ENCODE measurements at regions of chr7 and their contacts with region 1.

Region 1: DNA sequence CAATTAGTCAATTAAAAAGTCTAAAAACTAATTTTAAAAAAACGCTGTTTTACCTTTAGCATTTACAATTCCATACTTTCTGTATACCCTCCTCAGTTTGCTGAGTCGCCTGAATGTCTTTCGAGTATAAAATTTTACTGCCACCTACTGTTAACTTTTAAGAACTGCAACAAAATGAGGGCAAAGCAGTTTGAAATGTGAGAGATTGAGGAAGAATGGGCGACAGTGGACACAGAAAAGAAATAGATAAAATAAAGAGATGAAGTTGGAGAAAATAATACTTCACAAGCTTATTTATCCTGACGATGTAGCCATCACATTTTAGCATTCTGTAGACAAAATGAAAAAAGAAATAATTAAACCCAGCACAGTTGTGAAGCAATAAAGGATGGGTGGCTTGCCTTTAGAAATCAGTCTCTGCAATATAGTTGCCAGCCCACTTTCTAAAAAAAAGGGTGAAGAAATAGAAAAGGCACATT is 110.8 kb upstream of the PTN start:
- DNase-seq: no peak
- ATAC-seq: peak; percentile 82
- H3K4me3 ChIP-seq: no peak overlapping the region
- H3K27ac ChIP-seq: no peak overlapping the region
- H3K4me1 ChIP-seq: no peaks in the 10 kb centered on the region
- H3K27me3 ChIP-seq: no peaks in the 10 kb centered on the region
- CTCF ChIP-seq: peak; percentile 47 to 66 (median 53); a peak in 5 of 6 replicates
- EP300 ChIP-seq: no peak
- POLR2A ChIP-seq: no peak
- RAD21 ChIP-seq: peak; percentile 76

Region 2: GRCh38 chr7:136405931-136406777 is 1048.1 kb before region 1 on chr7:
- CTCF ChIA-PET with region 1: interaction called, 3 read pairs
- POLR2A ChIA-PET with region 1: no interaction called
- RAD21 ChIA-PET with region 1: no interaction called
- SMC1A ChIA-PET with region 1: interaction called, 3 read pairs
- in situ Hi-C with region 1: no loop called
- intact Hi-C with region 1: loop called (anchors 5 kb)
- DNase-seq: no peak
- ATAC-seq: peak; percentile 98
- H3K4me3 ChIP-seq: no peak overlapping the region
- H3K27ac ChIP-seq: no peak overlapping the region
- H3K4me1 ChIP-seq: no peaks in the 10 kb centered on the region
- H3K27me3 ChIP-seq: no peaks in the 10 kb centered on the region
- CTCF ChIP-seq: peak; percentile 56 to 84 (median 81)
- EP300 ChIP-seq: no peak
- POLR2A ChIP-seq: no peak
- RAD21 ChIP-seq: peak; percentile 56

Region 3: GRCh38 chr7:137169282-137169698 is 285.0 kb before region 1 on chr7:
- CTCF ChIA-PET with region 1: interaction called, 5 read pairs
- POLR2A ChIA-PET with region 1: no interaction called
- RAD21 ChIA-PET with region 1: no interaction called
- SMC1A ChIA-PET with region 1: no interaction called
- in situ Hi-C with region 1: no loop called
- intact Hi-C with region 1: loop called (anchors 2 kb)
- DNase-seq: no peak
- ATAC-seq: peak; percentile 72
- H3K4me3 ChIP-seq: no peak overlapping the region
- H3K27ac ChIP-seq: no peak overlapping the region
- H3K4me1 ChIP-seq: no peaks in the 10 kb centered on the region
- H3K27me3 ChIP-seq: no peaks in the 10 kb centered on the region
- CTCF ChIP-seq: peak in 2 of 3 experiments; percentile 25 to 42; a peak in 4 of 6 replicates
- EP300 ChIP-seq: no peak
- POLR2A ChIP-seq: no peak
- RAD21 ChIP-seq: peak; percentile 43; the same call in 1 of the 2 replicates

Region 4: GRCh38 chr7:137992550-137993394 is 538.5 kb after region 1 on chr7:
- CTCF ChIA-PET with region 1: no interaction called
- POLR2A ChIA-PET with region 1: no interaction called
- RAD21 ChIA-PET with region 1: no interaction called
- SMC1A ChIA-PET with region 1: no interaction called
- in situ Hi-C with region 1: no loop called
- intact Hi-C with region 1: no loop called
- DNase-seq: no peak
- ATAC-seq: peak; percentile 76
- H3K4me3 ChIP-seq: peak overlapping the region; percentile 26; the same call in 1 of the 2 replicates
- H3K27ac ChIP-seq: peak overlapping the region; percentile 43
- H3K4me1 ChIP-seq: peaks cover 55% of the 10 kb centered on the region
- H3K27me3 ChIP-seq: no peaks in the 10 kb centered on the region
- CTCF ChIP-seq: no peak
- EP300 ChIP-seq: peak; percentile 6 to 70; a peak in 2 of 4 replicates
- POLR2A ChIP-seq: no peak
- RAD21 ChIP-seq: no peak